Pancreas (tissue), 10 donors: ENCODE measurements at regions of chr1 and their contacts with region 1.

Region 1: GRCh38 chr1:3403388-3404231 is 50.9 kb upstream of the ARHGEF16 start:
- DNase-seq: peak in 1 of 6 donors; percentile 67
- ATAC-seq: no peak
- H3K4me3 ChIP-seq: no peak overlapping the region
- H3K27ac ChIP-seq: no peak overlapping the region
- H3K4me1 ChIP-seq: no peaks in the 10 kb centered on the region
- H3K27me3 ChIP-seq: no peaks in the 10 kb centered on the region
- CTCF ChIP-seq: no peak

Region 2: DNA sequence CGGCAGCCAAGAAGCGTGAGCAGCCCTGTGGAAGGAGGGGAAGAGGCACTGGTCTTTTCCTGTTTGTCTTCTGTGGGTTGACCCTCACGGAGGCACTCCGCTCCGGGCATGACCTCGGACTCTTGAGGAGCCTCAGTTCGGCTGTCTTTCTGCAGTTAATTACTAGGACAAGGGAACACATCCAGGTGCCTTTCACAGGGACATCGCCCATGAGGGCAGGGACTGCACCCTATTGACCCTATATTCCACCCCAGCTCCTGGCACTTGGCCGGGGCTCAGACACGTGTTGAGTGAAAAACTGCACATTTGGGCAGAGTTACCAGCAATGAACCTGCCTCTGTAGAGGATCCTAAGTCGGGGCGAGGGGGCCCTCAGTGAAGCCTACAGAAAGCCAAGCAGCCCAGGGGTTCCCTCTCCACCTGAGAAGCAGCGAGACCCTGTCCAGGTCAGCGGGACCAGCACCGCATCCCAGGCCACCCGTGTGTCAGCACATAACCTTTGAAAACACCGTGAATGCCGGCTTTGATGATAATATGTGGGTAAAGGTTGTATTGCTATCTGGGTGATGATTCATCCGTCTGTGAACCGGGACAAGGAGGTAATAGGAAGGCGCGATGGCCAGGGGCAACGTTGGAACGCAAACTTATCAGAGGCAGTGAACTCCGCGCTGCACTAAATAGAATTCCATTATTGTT is 110.6 kb before region 1 on chr1:
- intact Hi-C with region 1: loop called in 1 of 3 experiments (anchors 10 kb)
- DNase-seq: no peak
- ATAC-seq: no peak
- H3K4me3 ChIP-seq: no peak overlapping the region
- H3K27ac ChIP-seq: no peak overlapping the region
- H3K4me1 ChIP-seq: no peaks in the 10 kb centered on the region
- H3K27me3 ChIP-seq: no peaks in the 10 kb centered on the region
- CTCF ChIP-seq: no peak

Region 3: GRCh38 chr1:3312898-3313575 is 90.6 kb before region 1 on chr1:
- intact Hi-C with region 1: no loop called
- DNase-seq: peak in 5 of 6 donors; percentile 66 to 75 (median 72)
- ATAC-seq: peak; percentile 63 to 89 (median 82)
- H3K4me3 ChIP-seq: no peak overlapping the region
- H3K27ac ChIP-seq: peak overlapping the region; percentile 64 to 86 (median 83)
- H3K4me1 ChIP-seq: no peaks in the 10 kb centered on the region
- H3K27me3 ChIP-seq: no peaks in the 10 kb centered on the region
- CTCF ChIP-seq: no peak